Ovary (tissue), 10 donors: ENCODE measurements at regions of chr11 and their contacts with region 1.

Region 1: GRCh38 chr11:859509-860131 is 17.0 kb downstream of the TSPAN4 start:
- DNase-seq: peak; percentile 87 to 95 (median 93)
- H3K4me3 ChIP-seq: no peak overlapping the region
- H3K27ac ChIP-seq: peak overlapping the region; percentile 35 to 44
- H3K4me1 ChIP-seq: peaks cover 12% of the 10 kb centered on the region
- H3K27me3 ChIP-seq: no peaks in the 10 kb centered on the region
- CTCF ChIP-seq: no peak
- EP300 ChIP-seq: no peak
- POLR2A ChIP-seq: no peak

Region 2: GRCh38 chr11:914747-915501 is 55.3 kb after region 1 on chr11:
- intact Hi-C with region 1: no loop called
- DNase-seq: peak in 1 of 5 donors; percentile 35
- H3K4me3 ChIP-seq: no peak overlapping the region
- H3K27ac ChIP-seq: no peak overlapping the region
- H3K4me1 ChIP-seq: peaks cover 4% of the 10 kb centered on the region
- H3K27me3 ChIP-seq: no peaks in the 10 kb centered on the region
- CTCF ChIP-seq: no peak
- EP300 ChIP-seq: no peak
- POLR2A ChIP-seq: no peak

Region 3: GRCh38 chr11:1005928-1006327 is 146.3 kb after region 1 on chr11:
- intact Hi-C with region 1: loop called in 1 of 4 experiments (anchors 10 kb)
- DNase-seq: peak; percentile 65 to 83 (median 74)
- H3K4me3 ChIP-seq: no peak overlapping the region
- H3K27ac ChIP-seq: peak overlapping the region in 1 of 2 donors; percentile 12
- H3K4me1 ChIP-seq: peaks cover 2% of the 10 kb centered on the region
- H3K27me3 ChIP-seq: no peaks in the 10 kb centered on the region
- CTCF ChIP-seq: no peak
- EP300 ChIP-seq: no peak
- POLR2A ChIP-seq: no peak

Region 4: DNA sequence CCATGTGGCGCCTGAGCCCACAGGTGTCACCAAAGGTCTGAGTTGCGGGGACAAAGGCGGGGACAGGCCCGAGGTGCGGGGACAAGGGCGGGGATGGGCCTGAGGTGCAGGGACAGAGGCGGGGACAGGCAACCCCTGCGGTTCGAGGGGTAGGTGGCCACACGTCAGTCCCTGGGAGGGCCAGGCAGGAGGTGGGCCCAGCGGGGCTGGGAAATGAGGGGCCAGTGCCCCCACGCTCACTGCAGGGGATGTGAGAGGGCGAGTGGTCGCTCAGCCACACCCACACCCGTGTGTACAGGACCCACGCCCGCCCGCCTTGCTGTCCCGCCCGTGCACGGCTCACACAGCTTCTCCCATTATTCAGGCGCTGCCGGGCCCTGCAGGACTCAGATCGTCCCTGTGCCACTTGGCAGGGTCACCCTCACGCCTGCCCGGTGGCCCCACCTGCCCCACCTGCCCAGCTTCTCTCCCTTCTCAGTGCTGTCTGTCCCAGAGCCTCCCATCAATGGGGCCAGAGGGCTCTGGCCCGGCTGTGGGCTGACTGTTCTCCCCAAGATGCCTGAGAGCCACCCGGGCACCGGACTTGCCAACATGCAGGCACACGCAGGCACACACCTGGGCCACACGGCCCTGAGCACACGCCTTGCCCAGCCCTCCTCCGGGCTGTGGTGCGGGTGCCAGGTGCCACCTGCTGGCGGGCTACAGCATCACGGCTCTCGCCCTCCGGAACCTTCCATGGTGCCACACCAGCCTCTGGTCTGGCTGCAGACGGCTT is 191.1 kb after region 1 on chr11:
- intact Hi-C with region 1: loop called in 2 of 4 experiments (anchors 5 to 10 kb)
- DNase-seq: peak; percentile 51 to 78 (median 59)
- H3K4me3 ChIP-seq: no peak overlapping the region
- H3K27ac ChIP-seq: no peak overlapping the region
- H3K4me1 ChIP-seq: no peaks in the 10 kb centered on the region
- H3K27me3 ChIP-seq: no peaks in the 10 kb centered on the region
- CTCF ChIP-seq: peak; percentile 25 to 73 (median 64)
- EP300 ChIP-seq: no peak
- POLR2A ChIP-seq: no peak